ENCODE measurements at regions of chr16 and their contacts with region 1.

Region 1: DNA sequence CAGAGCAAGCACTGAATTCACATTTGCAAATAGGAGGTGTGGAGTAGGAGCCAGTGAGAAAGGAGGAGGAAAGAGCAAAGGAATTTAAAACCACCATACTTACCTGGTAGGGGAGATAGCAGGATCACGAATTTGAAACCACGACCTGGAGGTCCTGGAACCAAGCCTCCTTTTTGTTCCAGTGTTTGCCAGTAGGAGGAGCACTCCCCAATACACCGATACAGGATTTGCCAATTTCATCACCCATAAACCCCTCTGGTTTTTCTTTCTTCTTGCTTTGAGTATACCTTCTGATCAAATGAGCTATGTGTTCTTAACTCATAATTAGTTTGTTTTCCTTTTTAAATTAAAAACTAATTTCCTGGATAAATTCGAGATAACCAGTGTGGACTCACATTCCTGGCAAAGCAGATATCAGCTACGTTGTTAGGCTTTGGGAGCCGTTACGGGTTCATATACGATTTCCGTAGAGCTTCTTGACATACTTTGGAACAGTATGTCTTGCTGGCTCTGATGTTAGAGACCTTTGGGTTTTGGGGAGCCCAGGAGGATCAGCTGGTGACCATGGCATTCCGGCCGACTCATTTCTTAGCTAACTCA is 22.7 kb downstream of the BCO1 start:
- DNase-seq: no peak
- ATAC-seq: no peak
- H3K4me3 ChIP-seq: no peak overlapping the region
- H3K27ac ChIP-seq: no peak overlapping the region
- H3K4me1 ChIP-seq: peaks cover 0 to 17% (median 2%) of the 10 kb centered on the region in 12 donors
- H3K27me3 ChIP-seq: no peaks in the 10 kb centered on the region
- CTCF ChIP-seq: peak; percentile 34 to 66 (median 54)
- POLR2A ChIP-seq: no peak

Region 2: DNA sequence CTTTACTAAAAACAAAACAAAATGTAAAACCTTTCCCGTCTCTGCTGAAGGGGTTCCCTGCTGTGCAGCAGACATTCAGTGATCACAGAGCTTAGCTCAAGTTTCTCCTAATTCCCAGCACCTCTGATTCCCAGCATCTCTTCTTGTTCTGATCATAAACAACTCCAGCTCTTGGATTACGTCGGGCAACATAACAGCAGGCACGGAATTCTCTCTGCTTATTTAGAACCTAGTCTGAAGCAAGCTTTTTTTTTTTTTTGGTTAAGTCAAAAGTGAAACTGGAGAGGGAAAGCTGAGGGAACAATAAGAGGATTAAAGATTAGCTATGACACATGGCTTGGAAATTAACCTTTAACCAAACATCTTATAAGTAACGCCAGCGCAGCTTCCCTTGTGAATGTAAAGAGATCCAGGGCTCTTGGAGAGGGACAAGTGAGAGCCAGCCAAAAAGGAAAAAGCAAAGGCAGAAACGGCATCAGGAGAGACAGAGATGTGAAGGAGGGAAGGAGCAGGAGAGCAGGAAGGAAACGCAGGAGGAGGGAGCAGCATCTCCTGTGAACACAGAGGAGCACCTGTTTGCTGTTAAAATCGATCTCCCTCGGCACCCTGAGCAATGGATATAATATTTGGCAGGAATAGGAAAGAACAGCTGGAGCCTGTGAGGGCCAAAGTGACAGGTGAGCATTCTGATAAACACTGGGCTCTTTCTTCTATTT is 22.7 kb before region 1 on chr16 and contains the start of gene BCO1:
- intact Hi-C with region 1: loop called in 1 of 10 experiments (anchors 1 kb)
- DNase-seq: no peak
- ATAC-seq: peak in 1 of 4 donors; percentile 6
- H3K4me3 ChIP-seq: peak within 1 kb of the TSS in 10 of 12 donors; percentile 13 to 48 (median 34)
- H3K27ac ChIP-seq: peak within 1 kb of the TSS in 11 of 12 donors; percentile 4 to 81 (median 56)
- H3K4me1 ChIP-seq: peaks cover 0 to 19% (median 2%) of the 10 kb centered on the region in 12 donors
- H3K27me3 ChIP-seq: no peaks in the 10 kb centered on the region
- CTCF ChIP-seq: no peak
- POLR2A ChIP-seq: no peak
- total RNA-seq, gene BCO1: 0.70 to 0.75 TPM in 2 of 9 donors, not detected in the others

Region 3: DNA sequence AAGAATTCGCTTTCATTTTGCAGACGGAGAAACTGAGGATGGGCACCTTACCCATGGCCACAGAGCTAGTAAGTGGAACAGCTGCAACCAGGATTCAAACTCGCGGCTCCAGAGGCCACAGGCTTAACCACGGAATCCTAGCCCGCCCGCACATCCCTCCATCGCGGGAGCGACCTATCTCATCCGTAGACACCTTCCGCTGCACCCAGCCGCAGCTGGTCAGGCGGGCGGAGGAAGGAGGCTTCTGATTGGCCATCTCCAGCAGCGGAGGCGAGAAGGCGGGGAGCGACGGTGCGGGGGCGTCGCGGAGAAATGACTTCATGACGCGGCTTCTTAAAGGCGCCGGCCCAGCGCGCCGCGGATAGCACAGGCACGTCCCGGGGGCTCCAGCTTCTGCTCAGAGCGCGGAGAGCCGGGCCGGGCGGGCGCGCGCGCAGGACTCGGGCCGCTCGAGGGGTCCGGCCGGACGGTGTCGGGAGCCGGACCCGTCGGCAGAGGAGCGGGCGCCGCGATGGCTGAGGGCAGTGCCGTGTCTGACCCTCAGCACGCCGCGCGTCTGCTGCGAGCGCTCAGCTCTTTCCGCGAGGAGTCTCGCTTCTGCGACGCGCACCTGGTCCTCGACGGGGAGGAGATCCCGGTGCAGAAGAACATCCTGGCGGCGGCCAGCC is 53.6 kb after region 1 on chr16 and contains the start of gene GAN:
- intact Hi-C with region 1: loop called in 5 of 10 experiments (anchors 2 to 10 kb)
- DNase-seq: peak; percentile 95 to 97 (median 96)
- ATAC-seq: peak; percentile 98 to 100 (median 99)
- H3K4me3 ChIP-seq: peak within 1 kb of the TSS; percentile 56 to 94 (median 89)
- H3K27ac ChIP-seq: peak within 1 kb of the TSS; percentile 64 to 96 (median 88)
- H3K4me1 ChIP-seq: peaks cover 0 to 38% (median 22%) of the 10 kb centered on the region in 12 donors
- H3K27me3 ChIP-seq: no peaks in the 10 kb centered on the region
- CTCF ChIP-seq: no peak
- POLR2A ChIP-seq: peak; percentile 67 to 90
- total RNA-seq, gene GAN: 8.7 to 17.7 (median 13.1) TPM